ENCODE measurements at regions of chr15 and their contacts with region 1.

Region 1: DNA sequence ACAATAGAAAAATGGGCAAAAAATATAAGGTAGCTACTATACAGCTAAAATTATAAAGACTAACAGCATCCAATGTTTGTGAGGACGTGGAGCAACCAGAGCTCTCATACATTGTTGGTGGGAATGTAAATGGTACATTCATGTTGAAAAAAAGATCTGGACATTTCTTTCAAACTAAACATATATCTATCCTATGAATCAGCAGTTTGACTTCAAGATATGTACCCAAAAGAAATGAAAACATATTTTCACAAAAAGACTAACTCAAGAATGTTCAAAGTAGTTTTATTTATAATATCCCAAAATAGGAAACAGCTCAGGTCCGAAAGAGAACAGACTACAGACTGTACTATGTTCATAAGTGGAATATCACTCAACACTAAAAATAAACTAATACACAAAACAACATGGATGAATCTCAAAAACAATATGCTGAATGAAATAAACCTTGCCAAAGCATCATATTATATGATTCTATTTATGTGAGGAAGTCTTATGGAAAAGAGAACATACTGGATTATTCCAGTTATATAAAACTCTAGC is 8.8 kb upstream of the TTBK2 start:
- DNase-seq: no peak
- H3K4me3 ChIP-seq: no peak overlapping the region
- H3K27ac ChIP-seq: no peak overlapping the region
- H3K4me1 ChIP-seq: no peaks in the 10 kb centered on the region
- H3K27me3 ChIP-seq: no peaks in the 10 kb centered on the region
- CTCF ChIP-seq: no peak
- EP300 ChIP-seq: no peak
- RAD21 ChIP-seq: no peak

Region 2: GRCh38 chr15:42704492-42704926 is 224.9 kb before region 1 on chr15:
- CTCF ChIA-PET with region 1: interaction called, 70 read pairs
- POLR2A ChIA-PET with region 1: no interaction called
- DNase-seq: peak; percentile 78
- H3K4me3 ChIP-seq: no peak overlapping the region
- H3K27ac ChIP-seq: no peak overlapping the region
- H3K4me1 ChIP-seq: no peaks in the 10 kb centered on the region
- H3K27me3 ChIP-seq: no peaks in the 10 kb centered on the region
- CTCF ChIP-seq: peak; percentile 88
- EP300 ChIP-seq: no peak
- RAD21 ChIP-seq: peak; percentile 97

Measured in SK-N-SH (cell line).